ENCODE measurements at regions of chr22 and their contacts with region 1.

Region 1: DNA sequence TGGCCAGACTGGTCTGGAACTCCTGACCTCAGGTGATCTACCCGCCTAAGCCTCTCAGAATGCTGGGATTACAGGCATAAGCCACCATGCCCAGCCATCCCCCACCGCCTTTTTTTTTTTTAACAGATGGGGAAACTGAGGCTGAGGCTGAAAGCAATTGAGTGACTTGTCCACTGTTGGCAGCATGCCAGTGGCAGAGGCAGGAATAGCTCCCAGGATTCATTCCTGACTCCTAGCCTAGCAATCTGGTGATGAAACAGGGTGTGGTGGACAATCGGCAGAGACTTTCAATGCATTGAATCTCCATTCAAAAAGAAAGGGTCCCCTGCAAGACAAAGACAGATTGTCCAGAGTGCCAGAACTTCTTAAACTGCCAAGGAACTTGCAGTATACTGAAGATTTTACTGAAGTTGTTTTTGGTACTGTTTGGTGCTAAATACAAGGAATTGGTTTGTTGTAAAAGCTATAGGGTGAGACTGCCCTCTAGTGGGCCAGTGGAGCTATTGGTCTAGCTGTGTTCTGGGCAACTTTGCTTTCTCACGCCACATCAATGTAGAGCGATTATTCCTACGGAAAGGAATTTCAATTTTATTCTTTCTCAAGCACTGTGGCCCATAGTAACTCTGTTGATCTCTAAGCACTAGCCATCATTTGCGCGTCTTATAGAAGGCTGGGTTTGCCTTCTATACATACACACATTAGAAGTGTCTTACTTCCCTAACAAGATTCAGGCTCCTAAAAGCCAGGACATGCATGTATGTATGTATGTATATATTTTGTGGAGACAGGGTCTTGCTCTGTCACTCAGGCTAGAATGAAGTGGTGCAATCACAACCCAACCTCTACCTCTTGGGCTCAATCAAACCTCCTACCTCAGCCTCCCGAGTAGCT is 21.0 kb downstream of the C22orf31 start:
- DNase-seq: peak in 34 of 35 experiments; percentile 16 to 86 (median 56)
- ATAC-seq: peak; percentile 64 to 78 (median 68)
- H3K4me3 ChIP-seq: no peak overlapping the region
- H3K4me3 Mint-ChIP-seq: no peak overlapping the region
- H3K27ac ChIP-seq: no peak overlapping the region
- H3K27ac Mint-ChIP-seq: no peak overlapping the region
- H3K4me1 ChIP-seq: no peaks in the 10 kb centered on the region
- H3K4me1 Mint-ChIP-seq: no peaks in the 10 kb centered on the region
- H3K27me3 ChIP-seq: peaks cover 0 to 8% of the 10 kb centered on the region in 2 experiments
- H3K27me3 Mint-ChIP-seq: no peaks in the 10 kb centered on the region

Region 2: GRCh38 chr22:27686534-27686933 is 1354.1 kb before region 1 on chr22:
- CTCF ChIA-PET with region 1: interaction called in 1 of 2 experiments, 12 read pairs
- POLR2A ChIA-PET with region 1: no interaction called
- DNase-seq: no peak
- ATAC-seq: no peak
- H3K4me3 ChIP-seq: no peak overlapping the region
- H3K4me3 Mint-ChIP-seq: no peak overlapping the region
- H3K27ac ChIP-seq: no peak overlapping the region
- H3K27ac Mint-ChIP-seq: no peak overlapping the region
- H3K4me1 ChIP-seq: no peaks in the 10 kb centered on the region
- H3K4me1 Mint-ChIP-seq: no peaks in the 10 kb centered on the region
- H3K27me3 ChIP-seq: peaks cover 0 to 12% of the 10 kb centered on the region in 2 experiments
- H3K27me3 Mint-ChIP-seq: peaks cover 0 to 4% of the 10 kb centered on the region in 2 donors

Region 3: DNA sequence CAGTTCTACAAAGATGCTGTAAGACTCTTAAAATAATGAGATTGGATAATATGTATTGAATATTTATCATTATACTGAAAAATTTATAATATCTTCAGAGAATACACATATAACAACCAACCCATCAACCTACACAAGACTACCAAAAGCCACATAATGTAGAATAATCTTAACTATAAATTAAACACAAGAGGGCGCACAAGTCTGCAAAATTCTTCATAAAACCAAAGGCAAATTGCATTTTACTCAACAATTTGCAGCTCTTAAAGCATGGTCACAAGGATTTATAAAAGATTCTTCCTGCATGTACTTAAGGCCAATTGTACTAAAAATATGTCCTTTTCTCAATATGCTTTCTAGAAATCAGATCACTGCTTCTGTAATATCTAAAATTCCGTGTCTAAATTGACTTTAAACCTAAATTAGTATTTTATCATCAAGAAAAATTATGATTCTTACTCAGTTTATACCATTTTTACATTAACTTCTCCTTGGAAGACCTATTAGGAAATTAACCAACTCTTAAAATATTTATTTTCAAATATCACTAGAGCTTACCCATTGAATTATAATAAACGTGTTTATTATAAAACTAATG is 440.0 kb before region 1 on chr22:
- CTCF ChIA-PET with region 1: interaction called, 7 to 49 read pairs
- POLR2A ChIA-PET with region 1: no interaction called
- DNase-seq: peak in 9 of 35 experiments; percentile 3 to 70 (median 10)
- ATAC-seq: peak in 1 of 4 experiments; percentile 35
- H3K4me3 ChIP-seq: no peak overlapping the region
- H3K4me3 Mint-ChIP-seq: no peak overlapping the region
- H3K27ac ChIP-seq: no peak overlapping the region
- H3K27ac Mint-ChIP-seq: no peak overlapping the region
- H3K4me1 ChIP-seq: no peaks in the 10 kb centered on the region
- H3K4me1 Mint-ChIP-seq: no peaks in the 10 kb centered on the region
- H3K27me3 ChIP-seq: peaks cover 2 to 16% of the 10 kb centered on the region in 2 experiments
- H3K27me3 Mint-ChIP-seq: peaks cover 6 to 20% of the 10 kb centered on the region in 2 donors

Region 4: GRCh38 chr22:28855355-28856094 is 185.1 kb before region 1 on chr22:
- CTCF ChIA-PET with region 1: interaction called, 5 to 15 read pairs
- POLR2A ChIA-PET with region 1: no interaction called
- DNase-seq: peak in 30 of 35 experiments; percentile 4 to 81 (median 20)
- ATAC-seq: peak in 2 of 4 experiments; percentile 44 to 50
- H3K4me3 ChIP-seq: no peak overlapping the region
- H3K4me3 Mint-ChIP-seq: no peak overlapping the region
- H3K27ac ChIP-seq: no peak overlapping the region
- H3K27ac Mint-ChIP-seq: no peak overlapping the region
- H3K4me1 ChIP-seq: no peaks in the 10 kb centered on the region
- H3K4me1 Mint-ChIP-seq: peaks cover 0 to 8% (median 0%) of the 10 kb centered on the region in 3 donors
- H3K27me3 ChIP-seq: peaks cover 0 to 3% of the 10 kb centered on the region in 2 experiments
- H3K27me3 Mint-ChIP-seq: peaks cover 2 to 14% of the 10 kb centered on the region in 2 donors

Region 5: GRCh38 chr22:29106839-29107238 is 66.2 kb after region 1 on chr22:
- CTCF ChIA-PET with region 1: no interaction called
- POLR2A ChIA-PET with region 1: interaction called in 1 of 2 experiments, 12 read pairs
- DNase-seq: no peak
- ATAC-seq: no peak
- H3K4me3 ChIP-seq: no peak overlapping the region
- H3K4me3 Mint-ChIP-seq: no peak overlapping the region
- H3K27ac ChIP-seq: no peak overlapping the region
- H3K27ac Mint-ChIP-seq: no peak overlapping the region
- H3K4me1 ChIP-seq: no peaks in the 10 kb centered on the region
- H3K4me1 Mint-ChIP-seq: no peaks in the 10 kb centered on the region
- H3K27me3 ChIP-seq: peaks cover 0 to 20% of the 10 kb centered on the region in 2 experiments
- H3K27me3 Mint-ChIP-seq: peaks cover 12 to 32% of the 10 kb centered on the region in 2 donors

Region 6: GRCh38 chr22:29202212-29203192 is 161.9 kb after region 1 on chr22:
- CTCF ChIA-PET with region 1: no interaction called
- POLR2A ChIA-PET with region 1: no interaction called
- DNase-seq: peak in 33 of 35 experiments; percentile 3 to 52 (median 22)
- ATAC-seq: peak; percentile 72 to 79 (median 74)
- H3K4me3 ChIP-seq: peak overlapping the region in 1 of 2 donors; percentile 19
- H3K4me3 Mint-ChIP-seq: peak overlapping the region in 2 of 3 donors; percentile 34 to 45
- H3K27ac ChIP-seq: no peak overlapping the region
- H3K27ac Mint-ChIP-seq: peak overlapping the region in 1 of 2 donors; percentile 34
- H3K4me1 ChIP-seq: peaks cover 5 to 31% of the 10 kb centered on the region in 2 experiments
- H3K4me1 Mint-ChIP-seq: peaks cover 18 to 28% (median 26%) of the 10 kb centered on the region in 3 donors
- H3K27me3 ChIP-seq: peaks cover 0 to 64% of the 10 kb centered on the region in 2 experiments
- H3K27me3 Mint-ChIP-seq: peaks cover 27 to 50% of the 10 kb centered on the region in 2 donors